Naive thymus-derived CD4-positive, alpha-beta T cell (primary cell): ENCODE measurements at regions of chr10 and their contacts with region 1.

Region 1: DNA sequence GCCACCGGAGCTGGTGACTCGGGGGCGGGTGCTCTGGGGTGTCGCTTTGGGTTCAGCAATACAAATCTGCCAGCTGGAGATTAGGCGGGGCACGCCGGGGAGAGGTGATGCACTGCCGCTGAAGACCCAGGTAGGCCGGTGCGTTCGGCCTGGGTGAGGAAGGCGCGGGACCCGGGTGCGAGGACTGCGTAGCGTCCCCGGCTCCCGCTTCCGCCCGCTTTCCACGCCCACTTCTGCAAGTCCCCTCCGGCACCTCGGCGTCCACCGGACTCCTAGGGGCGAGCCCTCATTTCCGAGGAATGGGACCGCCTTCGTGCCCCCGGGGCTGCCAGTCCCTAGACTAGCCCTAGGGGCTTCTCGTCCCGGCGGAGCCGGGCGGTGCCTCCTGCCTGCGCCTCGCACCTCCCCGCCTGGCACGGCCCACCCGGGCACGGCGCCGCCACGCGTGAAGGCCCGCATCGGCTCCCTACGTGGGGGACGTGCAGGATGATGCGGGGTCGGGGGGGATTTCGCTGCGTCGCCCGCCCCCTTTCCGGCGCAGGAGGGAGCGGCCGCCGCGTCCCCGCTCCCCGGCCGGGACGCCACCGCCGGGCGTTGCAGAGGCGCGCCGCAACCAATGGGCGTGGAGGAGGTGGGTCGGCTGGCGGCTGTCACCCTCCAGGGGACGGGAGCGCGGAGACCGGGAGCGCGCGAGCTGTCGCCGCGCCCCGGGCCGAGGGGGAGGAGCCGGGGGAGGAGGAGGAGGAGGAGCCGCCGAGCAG is 40.0 kb downstream of the HK1 start:
- DNase-seq: peak; percentile 88 to 96 (median 91)
- ATAC-seq: peak; percentile 97
- H3K4me3 ChIP-seq: peak overlapping the region; percentile 85
- H3K4me3 Mint-ChIP-seq: peak overlapping the region; percentile 86 to 99 (median 96)
- H3K27ac ChIP-seq: peak overlapping the region; percentile 90
- H3K27ac Mint-ChIP-seq: peak overlapping the region; percentile 51 to 97 (median 86)
- H3K4me1 ChIP-seq: peaks cover 22 to 26% of the 10 kb centered on the region in 2 donors
- H3K4me1 Mint-ChIP-seq: peaks cover 7 to 49% (median 36%) of the 10 kb centered on the region in 7 donors
- H3K27me3 ChIP-seq: no peaks in the 10 kb centered on the region
- H3K27me3 Mint-ChIP-seq: no peaks in the 10 kb centered on the region

Region 2: GRCh38 chr10:68955832-68956532 is 362.3 kb before region 1 on chr10 and contains the start of gene DDX21:
- CTCF ChIA-PET with region 1: no interaction called
- POLR2A ChIA-PET with region 1: no interaction called
- intact Hi-C with region 1: loop called in 1 of 2 experiments (anchors 2 kb)
- DNase-seq: peak; percentile 70 to 94 (median 89)
- ATAC-seq: peak; percentile 89
- H3K4me3 ChIP-seq: peak within 1 kb of the TSS; percentile 71
- H3K4me3 Mint-ChIP-seq: peak within 1 kb of the TSS; percentile 91 to 100 (median 98)
- H3K27ac ChIP-seq: peak within 1 kb of the TSS; percentile 97
- H3K27ac Mint-ChIP-seq: peak within 1 kb of the TSS; percentile 96 to 100 (median 99)
- H3K4me1 ChIP-seq: peaks cover 7 to 11% of the 10 kb centered on the region in 2 donors
- H3K4me1 Mint-ChIP-seq: peaks cover 15 to 53% (median 33%) of the 10 kb centered on the region in 7 donors
- H3K27me3 ChIP-seq: no peaks in the 10 kb centered on the region
- H3K27me3 Mint-ChIP-seq: no peaks in the 10 kb centered on the region
- total RNA-seq, gene DDX21: 43.5 to 101 (median 86.7) TPM

Region 3: GRCh38 chr10:69179743-69180524 is 138.4 kb before region 1 on chr10 and contains the start of gene SUPV3L1:
- CTCF ChIA-PET with region 1: no interaction called
- POLR2A ChIA-PET with region 1: no interaction called
- intact Hi-C with region 1: loop called (anchors 2 to 5 kb)
- DNase-seq: peak; percentile 72 to 91 (median 87)
- ATAC-seq: peak; percentile 87
- H3K4me3 ChIP-seq: peak within 1 kb of the TSS; percentile 83
- H3K4me3 Mint-ChIP-seq: peak within 1 kb of the TSS; percentile 85 to 98 (median 96)
- H3K27ac ChIP-seq: peak within 1 kb of the TSS; percentile 95
- H3K27ac Mint-ChIP-seq: peak within 1 kb of the TSS; percentile 98 to 100 (median 99)
- H3K4me1 ChIP-seq: peaks cover 12 to 15% of the 10 kb centered on the region in 2 donors
- H3K4me1 Mint-ChIP-seq: peaks cover 22 to 55% (median 38%) of the 10 kb centered on the region in 7 donors
- H3K27me3 ChIP-seq: no peaks in the 10 kb centered on the region
- H3K27me3 Mint-ChIP-seq: no peaks in the 10 kb centered on the region
- total RNA-seq, gene SUPV3L1: 39.3 to 63.2 (median 42.1) TPM

Region 4: DNA sequence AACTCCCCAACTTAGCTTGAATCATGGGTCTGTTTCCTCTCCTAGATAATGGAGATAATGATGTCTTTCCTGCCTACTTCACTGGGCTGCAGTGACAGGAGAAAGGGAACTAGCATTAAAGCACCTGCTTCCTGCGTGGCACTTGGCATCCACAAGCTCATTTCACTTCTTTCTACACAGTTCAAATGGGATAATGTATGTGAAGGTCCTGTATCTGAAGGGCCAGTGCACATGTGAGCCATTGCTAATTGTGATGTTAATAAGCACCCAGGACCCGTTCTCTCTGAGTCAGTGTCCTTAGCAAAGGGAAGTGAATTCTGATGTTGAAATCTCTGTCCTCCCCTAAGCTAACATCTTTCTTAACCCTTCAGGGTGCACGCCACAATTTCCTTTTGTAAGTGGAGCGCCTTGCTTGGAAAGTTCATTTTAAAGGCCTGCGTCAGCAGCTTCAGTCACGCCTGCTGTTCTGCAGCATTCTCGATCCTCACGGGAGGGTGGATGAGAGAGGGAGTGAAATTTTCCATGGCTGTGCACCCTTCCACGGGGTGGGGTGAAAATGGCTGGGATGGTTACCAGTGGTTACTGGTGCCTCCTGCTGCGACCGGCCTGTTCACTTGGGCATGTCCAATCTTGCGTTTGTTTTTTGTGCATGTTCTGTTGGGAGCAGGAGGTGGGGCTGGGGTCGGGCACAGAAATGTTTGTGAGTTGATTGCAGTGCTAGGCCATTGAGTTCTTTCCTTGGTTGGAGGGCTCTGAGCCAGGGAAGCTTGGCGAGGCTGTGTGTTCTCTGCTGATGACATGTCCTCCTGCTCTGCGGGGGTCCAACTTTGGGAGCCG is 19.2 kb after region 1 on chr10:
- CTCF ChIA-PET with region 1: no interaction called
- POLR2A ChIA-PET with region 1: interaction called, 34 read pairs
- intact Hi-C with region 1: loop called in 1 of 2 experiments (anchors 2 kb)
- DNase-seq: no peak
- ATAC-seq: peak; percentile 73
- H3K4me3 ChIP-seq: no peak overlapping the region
- H3K4me3 Mint-ChIP-seq: peak overlapping the region in 5 of 10 donors; percentile 2 to 34 (median 11)
- H3K27ac ChIP-seq: no peak overlapping the region
- H3K27ac Mint-ChIP-seq: peak overlapping the region in 7 of 9 donors; percentile 36 to 77 (median 67)
- H3K4me1 ChIP-seq: peaks cover 19 to 50% of the 10 kb centered on the region in 2 donors
- H3K4me1 Mint-ChIP-seq: peaks cover 54 to 94% (median 72%) of the 10 kb centered on the region in 7 donors
- H3K27me3 ChIP-seq: no peaks in the 10 kb centered on the region
- H3K27me3 Mint-ChIP-seq: no peaks in the 10 kb centered on the region

Region 5: GRCh38 chr10:69360485-69361324 is 42.4 kb after region 1 on chr10:
- CTCF ChIA-PET with region 1: interaction called, 4 read pairs
- POLR2A ChIA-PET with region 1: interaction called, 65 read pairs
- intact Hi-C with region 1: loop called (anchors 1 to 2 kb)
- DNase-seq: no peak
- ATAC-seq: no peak
- H3K4me3 ChIP-seq: no peak overlapping the region
- H3K4me3 Mint-ChIP-seq: peak overlapping the region in 9 of 10 donors; percentile 21 to 83 (median 73)
- H3K27ac ChIP-seq: peak overlapping the region; percentile 57
- H3K27ac Mint-ChIP-seq: peak overlapping the region; percentile 83 to 98 (median 94)
- H3K4me1 ChIP-seq: peaks cover 12 to 48% of the 10 kb centered on the region in 2 donors
- H3K4me1 Mint-ChIP-seq: peaks cover 44 to 77% (median 64%) of the 10 kb centered on the region in 7 donors
- H3K27me3 ChIP-seq: no peaks in the 10 kb centered on the region
- H3K27me3 Mint-ChIP-seq: no peaks in the 10 kb centered on the region

Region 6: GRCh38 chr10:69506834-69507721 is 188.8 kb after region 1 on chr10:
- CTCF ChIA-PET with region 1: no interaction called
- POLR2A ChIA-PET with region 1: interaction called, 3 read pairs
- intact Hi-C with region 1: loop called in 1 of 2 experiments (anchors 5 kb)
- DNase-seq: peak in 2 of 9 donors; percentile 5
- ATAC-seq: peak; percentile 11
- H3K4me3 ChIP-seq: peak overlapping the region; percentile 43
- H3K4me3 Mint-ChIP-seq: peak overlapping the region; percentile 63 to 80 (median 74)
- H3K27ac ChIP-seq: no peak overlapping the region
- H3K27ac Mint-ChIP-seq: peak overlapping the region; percentile 58 to 93 (median 86)
- H3K4me1 ChIP-seq: peaks cover 7 to 8% of the 10 kb centered on the region in 2 donors
- H3K4me1 Mint-ChIP-seq: peaks cover 9 to 16% (median 10%) of the 10 kb centered on the region in 7 donors
- H3K27me3 ChIP-seq: no peaks in the 10 kb centered on the region
- H3K27me3 Mint-ChIP-seq: peaks cover 0 to 29% (median 0%) of the 10 kb centered on the region in 5 donors

Region 7: DNA sequence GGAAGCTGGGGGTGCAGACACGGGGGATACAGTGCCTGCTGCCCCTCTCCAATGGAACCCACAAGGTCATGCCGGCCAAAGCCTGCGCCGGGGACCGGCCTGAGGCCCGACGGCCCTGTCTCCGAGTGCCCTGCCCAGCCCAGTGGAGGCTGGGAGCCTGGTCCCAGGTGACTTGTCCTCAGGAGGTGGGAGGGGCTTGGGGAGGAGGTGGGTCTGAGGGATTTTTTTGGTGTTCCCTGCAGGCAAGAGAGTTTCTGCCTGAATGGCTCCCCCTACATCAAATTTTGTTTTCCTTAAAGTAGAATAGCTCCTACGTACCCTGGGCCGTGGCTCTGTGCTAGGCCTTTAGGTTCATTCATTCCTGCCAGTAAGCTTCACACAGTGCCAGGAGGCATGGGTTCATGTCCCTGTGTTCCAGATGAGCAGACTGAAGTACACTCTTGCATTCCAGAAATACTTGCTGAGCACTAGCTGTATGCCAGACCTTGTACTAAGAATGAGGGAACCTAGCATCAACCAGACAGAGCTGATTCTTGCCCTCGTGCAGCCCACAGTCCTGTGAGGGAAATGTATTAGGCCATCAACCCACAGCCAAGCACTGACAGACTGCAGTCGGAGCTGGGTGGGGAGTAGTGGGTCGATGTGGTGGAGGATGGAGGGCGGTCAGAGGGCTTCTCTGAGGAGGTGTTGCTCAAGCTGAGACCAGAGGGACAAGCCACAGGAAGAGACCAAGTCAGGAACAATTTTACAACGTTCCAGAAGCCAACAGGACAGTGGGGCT is 1435.7 kb after region 1 on chr10:
- CTCF ChIA-PET with region 1: no interaction called
- POLR2A ChIA-PET with region 1: no interaction called
- intact Hi-C with region 1: no loop called
- DNase-seq: no peak
- ATAC-seq: no peak
- H3K4me3 ChIP-seq: no peak overlapping the region
- H3K4me3 Mint-ChIP-seq: no peak overlapping the region
- H3K27ac ChIP-seq: no peak overlapping the region
- H3K27ac Mint-ChIP-seq: no peak overlapping the region
- H3K4me1 ChIP-seq: no peaks in the 10 kb centered on the region
- H3K4me1 Mint-ChIP-seq: peaks cover 0 to 5% (median 0%) of the 10 kb centered on the region in 7 donors
- H3K27me3 ChIP-seq: no peaks in the 10 kb centered on the region
- H3K27me3 Mint-ChIP-seq: peaks cover 0 to 3% (median 0%) of the 10 kb centered on the region in 5 donors